A549 (cell line): ENCODE measurements at regions of chr5 and their contacts with region 1.

Region 1: DNA sequence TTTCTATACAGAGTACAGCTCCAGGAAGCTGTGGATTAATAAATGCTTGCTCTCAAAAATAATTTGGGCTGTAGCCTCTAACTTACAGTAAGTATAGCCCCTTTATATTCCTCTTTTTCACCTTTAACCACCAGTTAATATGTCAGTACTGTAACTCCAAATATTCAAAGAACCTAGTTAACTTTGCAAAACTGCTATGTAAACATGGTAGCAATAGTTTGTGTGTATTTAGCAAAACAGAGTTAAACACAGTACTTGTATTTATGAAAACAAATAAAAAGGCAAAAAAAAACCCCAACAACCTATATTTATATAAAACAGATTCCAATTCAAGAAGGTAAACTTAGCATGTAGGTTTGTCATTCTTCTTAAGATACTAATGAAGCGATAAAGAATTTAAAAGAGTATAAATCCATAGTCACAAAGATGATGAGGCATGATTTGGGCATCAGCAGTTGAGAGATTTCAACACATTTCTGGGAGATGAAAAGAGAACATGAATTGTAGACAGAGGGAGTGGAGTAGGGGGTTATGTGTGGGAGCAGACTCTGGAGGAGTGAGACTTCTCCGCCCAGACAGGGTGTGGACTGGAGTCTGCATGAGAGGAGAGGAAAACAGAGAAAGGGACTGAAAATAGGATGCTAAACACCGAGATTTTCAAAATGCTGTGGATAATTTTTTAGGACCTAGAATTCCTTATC is 47.0 kb upstream of the F2RL1 start:
- DNase-seq: peak in 1 of 2 experiments; percentile 91
- ATAC-seq: peak; percentile 92 to 98
- H3K4me3 ChIP-seq: no peak overlapping the region
- H3K27ac ChIP-seq: peak overlapping the region; percentile 81
- H3K4me1 ChIP-seq: peaks cover 19% of the 10 kb centered on the region
- CTCF ChIP-seq: no peak
- EP300 ChIP-seq: peak; percentile 65 to 69; a peak in 4 of 5 replicates
- POLR2A ChIP-seq: no peak
- RAD21 ChIP-seq: peak in 1 of 2 experiments; percentile 24; a peak in 1 of 5 replicates

Region 2: GRCh38 chr5:76425928-76426804 is 345.7 kb before region 1 on chr5:
- CTCF ChIA-PET with region 1: no interaction called
- POLR2A ChIA-PET with region 1: no interaction called
- DNase-seq: no peak
- ATAC-seq: no peak
- H3K4me3 ChIP-seq: no peak overlapping the region
- H3K27ac ChIP-seq: no peak overlapping the region
- H3K4me1 ChIP-seq: no peaks in the 10 kb centered on the region; the same call in 2 of the 3 replicates
- CTCF ChIP-seq: no peak
- EP300 ChIP-seq: no peak
- POLR2A ChIP-seq: no peak
- RAD21 ChIP-seq: no peak

Region 3: GRCh38 chr5:76601470-76601869 is 170.4 kb before region 1 on chr5:
- CTCF ChIA-PET with region 1: interaction called, 145 read pairs
- POLR2A ChIA-PET with region 1: interaction called, 4 read pairs
- DNase-seq: peak; percentile 63 to 75
- ATAC-seq: peak; percentile 76 to 91; a peak in 5 of 6 replicates
- H3K4me3 ChIP-seq: no peak overlapping the region
- H3K27ac ChIP-seq: peak overlapping the region in 1 of 2 experiments; percentile 41; a peak in 2 of 6 replicates
- H3K4me1 ChIP-seq: peaks cover 11% of the 10 kb centered on the region
- CTCF ChIP-seq: peak; percentile 88
- EP300 ChIP-seq: no peak
- POLR2A ChIP-seq: no peak
- RAD21 ChIP-seq: peak; percentile 95 to 96

Region 4: GRCh38 chr5:76696251-76696650 is 75.6 kb before region 1 on chr5:
- CTCF ChIA-PET with region 1: interaction called, 12 read pairs
- POLR2A ChIA-PET with region 1: no interaction called
- DNase-seq: no peak
- ATAC-seq: no peak
- H3K4me3 ChIP-seq: no peak overlapping the region
- H3K27ac ChIP-seq: no peak overlapping the region
- H3K4me1 ChIP-seq: peaks cover 15% of the 10 kb centered on the region
- CTCF ChIP-seq: no peak
- EP300 ChIP-seq: no peak
- POLR2A ChIP-seq: no peak
- RAD21 ChIP-seq: no peak

Region 5: GRCh38 chr5:76736679-76737556 is 34.9 kb before region 1 on chr5:
- CTCF ChIA-PET with region 1: interaction called, 44 read pairs
- POLR2A ChIA-PET with region 1: interaction called, 3 read pairs
- DNase-seq: no peak
- ATAC-seq: no peak
- H3K4me3 ChIP-seq: no peak overlapping the region
- H3K27ac ChIP-seq: peak overlapping the region; percentile 71 to 82
- H3K4me1 ChIP-seq: peaks cover 44% of the 10 kb centered on the region
- CTCF ChIP-seq: no peak
- EP300 ChIP-seq: no peak
- POLR2A ChIP-seq: no peak
- RAD21 ChIP-seq: no peak

Region 6: GRCh38 chr5:76785487-76785886 is 13.6 kb after region 1 on chr5:
- CTCF ChIA-PET with region 1: interaction called, 35 read pairs
- POLR2A ChIA-PET with region 1: interaction called, 3 read pairs
- DNase-seq: peak; percentile 82 to 93
- ATAC-seq: peak; percentile 74 to 77
- H3K4me3 ChIP-seq: no peak overlapping the region
- H3K27ac ChIP-seq: peak overlapping the region; percentile 73 to 87
- H3K4me1 ChIP-seq: peaks cover 57% of the 10 kb centered on the region
- CTCF ChIP-seq: no peak
- EP300 ChIP-seq: peak; percentile 52 to 71; a peak in 3 of 5 replicates
- POLR2A ChIP-seq: no peak
- RAD21 ChIP-seq: peak in 1 of 2 experiments; percentile 38; a peak in 2 of 5 replicates

Region 7: DNA sequence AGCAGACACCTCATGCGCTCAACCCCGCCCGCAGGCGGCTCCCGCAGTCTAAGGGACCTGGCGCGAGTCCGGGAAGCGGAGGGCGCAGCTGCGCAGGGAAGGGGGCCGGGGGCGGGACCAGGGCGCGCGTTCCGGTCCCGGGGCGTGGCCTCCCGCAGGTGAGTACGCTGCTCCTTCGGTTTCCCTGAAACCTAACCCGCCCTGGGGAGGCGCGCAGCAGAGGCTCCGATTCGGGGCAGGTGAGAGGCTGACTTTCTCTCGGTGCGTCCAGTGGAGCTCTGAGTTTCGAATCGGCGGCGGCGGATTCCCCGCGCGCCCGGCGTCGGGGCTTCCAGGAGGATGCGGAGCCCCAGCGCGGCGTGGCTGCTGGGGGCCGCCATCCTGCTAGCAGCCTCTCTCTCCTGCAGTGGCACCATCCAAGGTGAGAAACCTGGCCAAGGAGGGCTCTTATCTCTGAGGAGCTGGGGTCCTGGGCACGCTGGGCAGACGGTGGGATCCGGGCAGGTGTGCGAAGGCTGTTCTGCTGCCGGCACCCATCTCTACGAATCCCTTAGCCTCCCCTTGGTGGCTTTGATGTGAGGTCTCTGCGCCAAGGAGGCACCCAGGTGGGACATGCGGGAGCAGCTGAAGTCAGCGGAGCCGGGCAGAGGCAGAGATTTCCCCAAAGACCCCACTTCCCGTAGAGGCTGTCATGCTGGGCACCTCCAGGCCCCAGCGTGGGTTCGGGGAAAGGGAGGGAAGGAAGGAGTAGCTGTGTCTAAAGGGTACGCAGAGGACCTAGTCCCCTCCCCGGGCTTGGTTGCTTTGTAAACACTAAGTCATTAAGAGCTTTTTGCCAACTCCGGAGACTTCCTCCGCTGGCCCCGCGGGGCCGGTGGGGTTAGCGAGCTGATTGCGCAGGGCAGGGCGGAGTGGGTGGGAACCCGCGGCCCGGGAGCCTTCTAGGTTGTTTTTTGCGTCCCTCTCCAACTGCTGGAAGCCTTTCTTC is 47.3 kb after region 1 on chr5 and contains the start of gene F2RL1:
- CTCF ChIA-PET with region 1: interaction called, 18 read pairs
- POLR2A ChIA-PET with region 1: no interaction called
- DNase-seq: peak; percentile 88 to 91
- ATAC-seq: peak; percentile 78 to 81
- H3K4me3 ChIP-seq: peak within 1 kb of the TSS; percentile 88
- H3K27ac ChIP-seq: peak within 1 kb of the TSS; percentile 83 to 94
- H3K4me1 ChIP-seq: peaks cover 74% of the 10 kb centered on the region
- CTCF ChIP-seq: no peak
- EP300 ChIP-seq: 0 out of 5 replicates have a peak, but pooled peaks of 1 of the 2 experiments have one; percentile 10
- POLR2A ChIP-seq: peak; percentile 47
- RAD21 ChIP-seq: peak; percentile 17 to 31; a peak in 1 of 5 replicates
- polyA plus RNA-seq, gene F2RL1: 226 and 328 TPM in 2 replicates